Sciatic nerve (tissue), 2 donors: ENCODE measurements at regions of chr7 and their contacts with region 1.

Region 1: GRCh38 chr7:54080971-54081370 is 461.2 kb upstream of the VSTM2A start:
- DNase-seq: no peak
- ATAC-seq: no peak

Region 2: GRCh38 chr7:52719676-52720075 is 1361.3 kb before region 1 on chr7:
- intact Hi-C with region 1: loop called (anchors 10 kb)
- DNase-seq: no peak
- ATAC-seq: no peak